Right ventricle myocardium superior (tissue), 1 donor: ENCODE measurements at regions of chr5 and their contacts with region 1.

Region 1: GRCh38 chr5:149809931-149810617 is 80.0 kb downstream of the PPARGC1B start:
- DNase-seq: no peak
- ATAC-seq: peak; percentile 2

Region 2: GRCh38 chr5:149367249-149367971 is 442.7 kb before region 1 on chr5:
- intact Hi-C with region 1: no loop called
- DNase-seq: no peak
- ATAC-seq: peak; percentile 50

Region 3: GRCh38 chr5:149646564-149646963 is 163.5 kb before region 1 on chr5:
- intact Hi-C with region 1: no loop called
- DNase-seq: no peak
- ATAC-seq: peak; percentile 26

Region 4: GRCh38 chr5:149749481-149750365 is 60.4 kb before region 1 on chr5:
- intact Hi-C with region 1: no loop called
- DNase-seq: no peak
- ATAC-seq: no peak

Region 5: DNA sequence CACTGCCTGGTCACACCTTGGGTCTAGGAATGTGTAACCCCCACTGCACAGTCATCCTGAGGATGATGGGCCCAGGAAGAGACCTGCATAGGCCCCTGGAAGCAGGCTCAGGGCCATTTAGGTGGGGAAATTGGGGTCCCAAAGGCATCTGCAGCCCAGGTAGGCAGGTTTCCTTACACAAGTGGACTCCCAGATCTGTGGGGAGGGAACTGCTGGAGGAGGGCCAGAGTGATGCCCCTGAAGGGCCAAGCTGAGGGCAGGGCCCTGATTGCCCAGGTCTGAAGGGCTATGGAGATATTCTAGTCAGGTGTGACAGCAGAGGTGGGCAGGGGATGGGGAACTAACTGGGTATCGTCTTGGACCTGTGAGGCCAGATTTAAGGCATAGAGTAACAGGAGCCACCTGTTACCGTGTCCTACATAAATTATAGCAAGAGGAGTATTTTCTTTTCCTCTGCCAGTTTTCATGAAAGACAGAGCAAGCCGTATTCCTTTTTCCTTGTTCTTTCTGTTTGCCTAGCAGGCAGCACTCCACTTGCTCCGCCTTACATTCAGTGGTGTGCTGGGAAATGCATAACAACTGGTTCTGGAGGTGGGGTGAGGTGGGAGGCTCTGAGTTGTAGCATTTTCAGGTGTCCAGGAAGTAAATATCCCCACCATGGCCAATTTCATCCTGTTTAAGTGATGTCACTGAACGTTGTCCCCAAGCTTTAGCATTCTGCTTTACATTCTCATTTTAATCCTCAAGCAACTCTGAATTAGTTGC is 38.7 kb before region 1 on chr5:
- intact Hi-C with region 1: loop called (anchors 5 kb)
- DNase-seq: no peak
- ATAC-seq: no peak